Endothelial cell of umbilical vein (primary cell): ENCODE measurements at regions of chr3 and their contacts with region 1.

Region 1: DNA sequence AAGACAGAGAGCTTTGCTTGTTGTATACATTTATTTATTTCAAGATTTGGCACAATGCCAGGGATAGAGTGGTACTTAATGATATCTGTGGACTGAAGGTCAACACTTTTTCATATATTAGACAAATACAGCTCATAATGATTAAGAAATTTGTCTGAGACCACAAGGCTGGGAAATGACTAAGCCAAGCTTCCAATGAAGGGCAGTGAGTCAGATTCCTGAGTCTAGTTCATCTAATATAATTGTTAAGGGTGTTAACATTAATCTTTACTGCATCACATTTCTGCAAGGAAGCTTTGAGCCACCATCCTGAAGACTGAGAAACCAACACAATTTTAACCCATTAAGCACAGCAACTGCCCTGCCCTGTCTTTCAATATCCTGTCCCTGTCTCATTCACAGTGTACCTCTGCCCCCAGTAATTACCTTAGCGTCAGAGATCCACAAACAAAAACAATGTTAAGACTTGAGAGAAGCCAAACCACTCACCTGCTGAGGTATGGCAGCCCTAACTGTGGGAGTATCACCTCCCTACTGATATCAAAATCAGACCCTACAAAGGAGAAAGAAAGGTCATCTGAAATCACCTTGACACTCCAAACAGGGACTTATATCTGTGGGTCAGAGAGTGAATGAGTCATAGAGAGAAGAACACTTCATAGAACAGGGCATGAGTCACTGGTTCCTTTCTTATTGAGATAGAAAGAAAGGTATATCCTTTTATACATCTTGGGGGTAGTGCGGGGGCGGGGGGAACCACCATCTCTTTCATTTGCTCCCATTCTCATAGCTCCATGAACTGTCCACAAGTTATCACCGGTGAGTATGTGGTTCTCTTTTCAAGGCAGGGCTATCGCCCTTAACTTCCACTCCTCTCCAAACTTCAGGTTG is 74.7 kb downstream of the MAGI1 start:
- DNase-seq: peak; percentile 94
- H3K4me3 ChIP-seq: peak overlapping the region in 1 of 3 experiments; percentile 38
- H3K27ac ChIP-seq: peak overlapping the region; percentile 95
- H3K4me1 ChIP-seq: peaks cover 46% of the 10 kb centered on the region
- H3K27me3 ChIP-seq: no peaks in the 10 kb centered on the region
- CTCF ChIP-seq: no peak
- POLR2A ChIP-seq: peak; percentile 45

Region 2: DNA sequence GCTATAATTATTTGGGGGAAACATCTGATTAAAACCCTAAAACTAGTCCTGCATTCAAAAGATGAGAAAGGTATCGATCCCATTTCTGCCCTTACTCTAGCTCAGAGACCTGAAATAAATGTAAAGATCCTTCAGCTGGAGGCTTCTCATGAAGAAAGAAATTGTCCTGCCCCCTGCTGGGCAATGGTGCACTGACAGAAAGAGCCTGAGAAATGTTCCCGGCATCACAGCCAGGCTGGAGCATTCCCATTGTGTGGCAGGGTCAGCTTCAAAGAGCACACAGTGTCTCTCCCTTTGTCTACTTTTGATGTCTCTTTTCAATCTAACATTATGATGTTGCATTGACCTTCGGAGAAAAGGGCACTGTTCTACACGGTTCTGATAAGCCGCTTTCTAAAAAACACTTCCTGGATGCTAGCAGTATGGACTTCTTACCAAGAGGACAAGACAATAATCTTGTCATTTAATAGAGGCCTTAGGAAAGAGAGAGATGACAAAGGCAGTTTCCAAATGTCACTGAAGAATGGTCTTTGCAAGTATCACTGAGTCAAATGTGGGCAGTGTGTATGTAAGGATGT is 212.8 kb before region 1 on chr3:
- CTCF ChIA-PET with region 1: no interaction called
- POLR2A ChIA-PET with region 1: no interaction called
- dilution Hi-C with region 1: no loop called
- intact Hi-C with region 1: no loop called
- DNase-seq: peak; percentile 52
- H3K4me3 ChIP-seq: no peak overlapping the region
- H3K27ac ChIP-seq: no peak overlapping the region
- H3K4me1 ChIP-seq: no peaks in the 10 kb centered on the region
- H3K27me3 ChIP-seq: no peaks in the 10 kb centered on the region
- CTCF ChIP-seq: peak; percentile 76 to 79
- POLR2A ChIP-seq: no peak

Region 3: GRCh38 chr3:65785065-65785645 is 178.9 kb before region 1 on chr3:
- CTCF ChIA-PET with region 1: no interaction called
- POLR2A ChIA-PET with region 1: no interaction called
- dilution Hi-C with region 1: no loop called
- intact Hi-C with region 1: loop called (anchors 1 kb)
- DNase-seq: peak; percentile 73
- H3K4me3 ChIP-seq: no peak overlapping the region
- H3K27ac ChIP-seq: no peak overlapping the region
- H3K4me1 ChIP-seq: no peaks in the 10 kb centered on the region
- H3K27me3 ChIP-seq: no peaks in the 10 kb centered on the region
- CTCF ChIP-seq: peak; percentile 25 to 41
- POLR2A ChIP-seq: no peak

Region 4: DNA sequence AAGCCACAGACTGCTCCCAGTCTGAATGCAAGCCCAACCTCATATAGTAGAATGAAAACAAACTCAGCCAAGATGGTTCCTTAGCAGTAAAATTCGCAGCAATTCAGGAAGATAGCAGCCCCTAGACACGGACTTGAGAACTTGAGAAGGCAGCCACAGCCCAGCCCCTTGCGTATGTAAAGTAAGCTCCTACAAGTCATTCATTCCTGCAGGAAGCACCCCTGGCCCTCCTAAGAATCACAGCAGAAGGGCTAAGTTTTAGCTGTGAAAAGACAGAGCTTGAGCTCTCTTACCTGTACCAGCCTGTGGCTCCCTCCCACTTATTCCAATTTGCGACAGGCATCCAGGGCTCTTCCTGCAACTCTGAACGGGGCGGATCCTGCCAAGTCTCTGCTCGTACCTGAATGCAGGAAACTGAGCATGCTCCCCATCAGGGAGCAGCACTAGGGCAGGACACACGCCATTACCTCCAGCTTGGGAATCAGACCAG is 61.7 kb before region 1 on chr3:
- CTCF ChIA-PET with region 1: interaction called, 4 read pairs
- POLR2A ChIA-PET with region 1: no interaction called
- dilution Hi-C with region 1: no loop called
- intact Hi-C with region 1: loop called (anchors 1 kb)
- DNase-seq: no peak
- H3K4me3 ChIP-seq: no peak overlapping the region
- H3K27ac ChIP-seq: no peak overlapping the region
- H3K4me1 ChIP-seq: peaks cover 37% of the 10 kb centered on the region
- H3K27me3 ChIP-seq: no peaks in the 10 kb centered on the region
- CTCF ChIP-seq: no peak
- POLR2A ChIP-seq: no peak

Region 5: GRCh38 chr3:65914740-65915367 is 49.2 kb before region 1 on chr3:
- CTCF ChIA-PET with region 1: no interaction called
- POLR2A ChIA-PET with region 1: interaction called, 3 read pairs
- dilution Hi-C with region 1: no loop called
- intact Hi-C with region 1: loop called (anchors 2 kb)
- DNase-seq: peak; percentile 17
- H3K4me3 ChIP-seq: no peak overlapping the region
- H3K27ac ChIP-seq: peak overlapping the region; percentile 45
- H3K4me1 ChIP-seq: peaks cover 13% of the 10 kb centered on the region
- H3K27me3 ChIP-seq: no peaks in the 10 kb centered on the region
- CTCF ChIP-seq: no peak
- POLR2A ChIP-seq: no peak

Region 6: DNA sequence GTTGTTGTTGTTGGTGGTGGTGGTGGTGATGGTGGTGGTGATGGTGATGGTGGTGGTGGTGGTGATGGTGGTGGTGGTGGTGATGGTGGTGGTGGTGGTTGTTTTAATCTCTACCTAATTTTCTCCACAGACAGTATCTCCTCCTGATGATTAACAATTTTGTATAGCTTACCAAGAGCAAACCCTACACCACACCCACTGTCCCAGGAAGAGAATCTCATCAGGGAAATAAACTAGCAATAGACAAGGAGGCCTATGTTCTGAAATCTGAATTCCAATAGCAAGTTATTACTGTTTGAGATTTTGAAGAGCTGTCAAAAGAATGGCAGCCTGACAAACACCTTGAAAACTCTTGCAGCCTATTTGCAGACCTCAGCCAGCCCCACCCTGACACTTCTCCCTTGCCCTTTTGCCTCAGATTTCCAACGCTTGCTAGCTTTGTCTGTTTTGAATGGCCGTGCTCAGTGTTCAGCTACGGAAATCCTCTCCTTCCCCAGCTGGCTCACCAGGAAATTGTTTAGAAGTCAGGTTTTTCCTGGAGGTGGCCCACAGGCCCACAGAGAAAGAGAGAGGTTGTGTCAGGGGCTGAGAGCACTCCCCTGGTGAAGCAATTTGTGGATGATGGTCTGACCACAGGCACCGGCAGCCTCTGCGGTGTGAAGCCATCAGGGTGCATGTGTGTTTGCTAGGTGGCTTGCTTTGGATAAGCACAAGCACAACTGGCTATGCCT is 27.0 kb before region 1 on chr3:
- CTCF ChIA-PET with region 1: interaction called, 6 read pairs
- POLR2A ChIA-PET with region 1: no interaction called
- dilution Hi-C with region 1: no loop called
- intact Hi-C with region 1: loop called (anchors 1 kb)
- DNase-seq: peak; percentile 82
- H3K4me3 ChIP-seq: no peak overlapping the region
- H3K27ac ChIP-seq: no peak overlapping the region
- H3K4me1 ChIP-seq: peaks cover 29% of the 10 kb centered on the region
- H3K27me3 ChIP-seq: no peaks in the 10 kb centered on the region
- CTCF ChIP-seq: no peak
- POLR2A ChIP-seq: no peak

Region 7: DNA sequence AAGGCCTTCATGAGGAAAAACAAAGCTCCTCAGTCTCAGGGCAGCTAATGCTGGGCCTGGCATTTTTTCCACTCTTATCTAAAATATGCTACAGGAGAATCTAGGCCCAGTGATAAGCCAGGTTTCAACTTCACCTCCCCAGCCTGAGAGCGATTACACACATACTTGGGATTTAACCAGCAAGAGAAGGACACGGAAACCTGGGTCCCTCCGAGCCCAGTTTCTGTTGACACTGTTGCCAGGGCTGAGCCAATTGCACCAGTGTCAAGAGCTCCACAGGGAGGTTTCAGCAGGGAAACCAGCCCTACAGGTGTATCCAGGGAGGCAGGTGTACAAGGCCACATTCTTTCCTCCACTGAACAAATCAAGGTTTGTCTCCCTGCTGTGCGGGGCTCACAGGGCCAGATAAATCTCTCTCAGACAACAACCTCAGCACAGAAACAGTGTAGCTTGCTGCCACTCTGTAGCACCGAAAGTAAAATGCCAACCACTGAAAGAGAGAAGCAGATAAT is 10.7 kb before region 1 on chr3:
- CTCF ChIA-PET with region 1: interaction called, 10 read pairs
- POLR2A ChIA-PET with region 1: interaction called, 6 read pairs
- dilution Hi-C with region 1: no loop called
- intact Hi-C with region 1: loop called (anchors 1 kb)
- DNase-seq: peak; percentile 52
- H3K4me3 ChIP-seq: no peak overlapping the region
- H3K27ac ChIP-seq: peak overlapping the region; percentile 70
- H3K4me1 ChIP-seq: peaks cover 83% of the 10 kb centered on the region
- H3K27me3 ChIP-seq: no peaks in the 10 kb centered on the region
- CTCF ChIP-seq: no peak
- POLR2A ChIP-seq: no peak

Region 8: GRCh38 chr3:66133050-66133757 is 169.2 kb after region 1 on chr3:
- CTCF ChIA-PET with region 1: interaction called, 3 read pairs
- POLR2A ChIA-PET with region 1: no interaction called
- dilution Hi-C with region 1: no loop called
- intact Hi-C with region 1: loop called (anchors 1 kb)
- DNase-seq: peak; percentile 79
- H3K4me3 ChIP-seq: no peak overlapping the region
- H3K27ac ChIP-seq: peak overlapping the region; percentile 68
- H3K4me1 ChIP-seq: peaks cover 24% of the 10 kb centered on the region
- H3K27me3 ChIP-seq: no peaks in the 10 kb centered on the region
- CTCF ChIP-seq: no peak
- POLR2A ChIP-seq: no peak

Region 9: DNA sequence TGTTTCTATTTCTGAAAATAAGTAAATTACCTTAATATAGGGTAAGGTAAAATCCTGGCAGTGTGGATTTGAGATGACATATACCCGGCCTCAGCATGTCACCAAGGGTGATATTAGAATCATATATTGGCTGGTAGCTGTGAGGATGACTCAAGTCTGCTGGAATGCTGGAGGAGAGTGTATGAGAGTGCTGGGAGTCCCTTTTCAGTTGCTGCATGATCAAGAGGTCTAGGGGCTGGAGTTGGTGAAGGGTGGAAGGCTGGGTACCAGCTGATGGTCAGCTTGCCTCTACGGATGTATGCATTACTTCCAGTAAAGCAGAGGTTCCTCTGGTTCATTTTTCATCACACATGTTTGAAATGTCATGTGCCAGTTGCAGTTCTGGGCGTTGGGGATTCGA is 297.3 kb after region 1 on chr3:
- CTCF ChIA-PET with region 1: no interaction called
- POLR2A ChIA-PET with region 1: no interaction called
- dilution Hi-C with region 1: no loop called
- intact Hi-C with region 1: no loop called
- DNase-seq: no peak
- H3K4me3 ChIP-seq: no peak overlapping the region
- H3K27ac ChIP-seq: no peak overlapping the region
- H3K4me1 ChIP-seq: peaks cover 10% of the 10 kb centered on the region
- H3K27me3 ChIP-seq: no peaks in the 10 kb centered on the region
- CTCF ChIP-seq: no peak
- POLR2A ChIP-seq: no peak